ENCODE measurements at regions of chr10 and their contacts with region 1.

Region 1: DNA sequence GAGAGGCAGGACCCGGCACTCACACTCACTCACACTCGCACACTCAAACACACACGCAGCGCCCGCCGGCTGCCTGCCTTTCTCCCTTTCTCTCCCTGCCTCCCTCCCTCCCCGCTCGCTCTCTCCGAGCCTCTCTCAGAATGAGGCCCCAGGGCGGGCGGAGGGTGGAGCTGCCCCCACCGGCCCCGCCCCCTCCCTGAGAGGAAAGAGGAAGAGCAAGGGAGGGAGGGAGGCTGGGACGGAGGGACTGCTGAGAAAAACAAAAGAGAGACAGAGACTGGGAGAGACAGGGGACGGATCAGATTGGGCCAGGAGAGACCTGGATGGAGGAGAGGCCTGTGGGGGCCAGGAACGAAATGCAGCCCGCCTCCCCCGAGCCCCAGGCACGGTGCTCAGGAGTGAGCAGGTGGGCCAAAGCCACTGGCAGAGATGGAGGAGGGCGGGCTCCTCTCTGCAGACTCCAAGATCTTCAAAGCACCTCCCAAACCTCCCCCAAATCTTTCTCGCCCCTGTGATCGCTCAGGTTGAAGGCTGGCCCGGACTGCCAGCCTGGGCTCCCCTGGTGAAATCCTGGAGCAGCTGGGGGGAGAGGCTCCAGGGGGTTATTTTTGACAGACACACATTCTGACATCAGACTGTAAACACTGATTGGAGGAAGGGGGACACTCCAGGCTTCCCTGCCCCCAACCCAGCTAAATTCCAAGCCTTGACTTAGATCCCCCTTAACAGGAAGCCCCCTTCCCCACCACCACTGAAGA is 5.1 kb downstream of the LDB1 start:
- DNase-seq: peak; percentile 97

Region 2: GRCh38 chr10:102055647-102056419 is 59.2 kb before region 1 on chr10 and contains the start of gene ARMH3:
- intact Hi-C with region 1: loop called (anchors 2 kb)
- DNase-seq: peak; percentile 94
- total RNA-seq, gene ARMH3: 50.4 TPM

Region 3: GRCh38 chr10:102064868-102065560 is 50.0 kb before region 1 on chr10 and contains the start of gene HPS6:
- intact Hi-C with region 1: loop called (anchors 2 kb)
- DNase-seq: peak; percentile 95
- total RNA-seq, gene HPS6: 12.1 TPM

Region 4: DNA sequence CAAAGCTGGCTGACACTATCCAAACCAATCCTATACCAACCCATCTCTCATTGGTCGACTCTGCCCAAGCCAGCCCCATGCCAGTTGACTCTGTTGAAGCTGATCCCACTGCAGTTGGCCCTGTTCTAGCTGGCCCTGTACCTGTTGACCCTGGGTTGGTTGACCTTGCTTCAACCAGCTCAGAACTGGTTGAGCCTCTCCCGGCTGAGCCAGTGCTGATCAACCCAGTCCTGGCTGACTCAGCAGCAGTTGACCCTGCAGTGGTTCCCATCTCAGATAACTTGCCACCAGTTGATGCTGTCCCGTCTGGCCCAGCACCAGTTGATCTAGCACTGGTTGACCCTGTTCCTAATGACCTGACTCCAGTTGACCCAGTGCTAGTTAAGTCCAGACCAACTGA is 25.1 kb after region 1 on chr10:
- intact Hi-C with region 1: no loop called
- DNase-seq: no peak

Measured in cardiac septum (tissue), 1 donor.